WTC11 (cell line): ENCODE measurements at regions of chr12 and their contacts with region 1.

Region 1: GRCh38 chr12:53200458-53201176 is 6.4 kb downstream of the ITGB7 start:
- DNase-seq: no peak
- ATAC-seq: no peak
- H3K4me3 Mint-ChIP-seq: no peak overlapping the region
- H3K27ac Mint-ChIP-seq: no peak overlapping the region
- H3K4me1 Mint-ChIP-seq: no peaks in the 10 kb centered on the region
- H3K27me3 Mint-ChIP-seq: peaks cover 54% of the 10 kb centered on the region
- CTCF ChIP-seq: no peak

Region 2: GRCh38 chr12:53054112-53054833 is 146.3 kb before region 1 on chr12:
- CTCF ChIA-PET with region 1: interaction called, 22 read pairs
- POLR2A ChIA-PET with region 1: no interaction called
- DNase-seq: peak; percentile 97
- ATAC-seq: peak; percentile 75
- H3K4me3 Mint-ChIP-seq: peak overlapping the region; percentile 94
- H3K27ac Mint-ChIP-seq: peak overlapping the region; percentile 98
- H3K4me1 Mint-ChIP-seq: peaks cover 31% of the 10 kb centered on the region
- H3K27me3 Mint-ChIP-seq: peaks cover 40% of the 10 kb centered on the region
- CTCF ChIP-seq: no peak

Region 3: DNA sequence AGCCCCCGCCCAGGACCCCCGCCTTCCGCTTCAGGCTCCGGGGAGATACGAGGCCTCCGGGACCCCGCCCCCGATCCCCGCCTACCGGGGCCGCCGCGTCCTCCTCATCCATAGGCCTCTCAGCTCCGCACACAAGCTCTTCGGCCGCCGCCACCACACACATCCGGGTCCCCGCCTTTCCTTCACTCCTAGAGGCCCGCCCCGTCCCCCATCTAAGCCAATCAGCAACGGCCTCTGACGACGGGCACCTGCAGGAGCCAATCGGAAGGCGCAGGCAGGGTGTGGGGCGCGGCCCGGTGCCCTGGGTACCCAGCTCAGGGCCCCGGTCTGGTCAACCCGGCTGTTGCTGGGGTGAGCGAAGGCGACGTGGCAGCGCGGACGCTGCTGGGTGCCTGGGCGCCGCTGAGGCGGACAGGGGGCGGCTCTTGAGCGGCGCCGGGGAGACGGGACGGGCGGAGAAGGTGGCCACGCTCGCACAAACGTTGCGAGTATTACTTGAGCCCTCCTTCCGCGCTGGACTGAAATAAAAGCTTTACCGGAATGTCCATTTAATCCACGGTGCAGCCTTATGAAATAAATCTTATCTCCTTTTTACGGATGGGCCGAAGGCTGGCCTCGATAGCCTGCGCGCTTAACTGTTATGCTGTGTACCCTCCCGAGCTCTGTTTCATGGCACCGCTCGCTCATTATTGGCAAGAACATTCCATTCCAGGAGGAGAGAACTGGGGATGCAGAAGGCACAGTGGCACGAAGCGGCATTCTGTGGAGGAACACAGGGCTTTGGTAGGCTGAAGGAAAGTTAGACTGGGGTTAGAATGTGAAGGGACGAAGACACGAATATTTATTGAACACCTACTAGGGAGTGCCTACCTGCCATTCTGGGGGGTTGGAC is 121.1 kb before region 1 on chr12 and contains the start of gene SPRYD3:
- CTCF ChIA-PET with region 1: interaction called, 18 read pairs
- POLR2A ChIA-PET with region 1: interaction called, 3 read pairs
- DNase-seq: peak; percentile 98
- ATAC-seq: peak; percentile 95
- H3K4me3 Mint-ChIP-seq: peak within 1 kb of the TSS; percentile 85
- H3K27ac Mint-ChIP-seq: peak within 1 kb of the TSS; percentile 95
- H3K4me1 Mint-ChIP-seq: peaks cover 13% of the 10 kb centered on the region
- H3K27me3 Mint-ChIP-seq: peaks cover 43% of the 10 kb centered on the region
- CTCF ChIP-seq: no peak
- total RNA-seq, gene SPRYD3: 6.5 to 11.9 TPM (median 6.8 TPM) in 3 replicates

Region 4: GRCh38 chr12:53143355-53143754 is 57.3 kb before region 1 on chr12:
- CTCF ChIA-PET with region 1: no interaction called
- POLR2A ChIA-PET with region 1: no interaction called
- DNase-seq: no peak
- ATAC-seq: no peak
- H3K4me3 Mint-ChIP-seq: no peak overlapping the region
- H3K27ac Mint-ChIP-seq: no peak overlapping the region
- H3K4me1 Mint-ChIP-seq: no peaks in the 10 kb centered on the region
- H3K27me3 Mint-ChIP-seq: peaks cover 28% of the 10 kb centered on the region
- CTCF ChIP-seq: no peak

Region 5: DNA sequence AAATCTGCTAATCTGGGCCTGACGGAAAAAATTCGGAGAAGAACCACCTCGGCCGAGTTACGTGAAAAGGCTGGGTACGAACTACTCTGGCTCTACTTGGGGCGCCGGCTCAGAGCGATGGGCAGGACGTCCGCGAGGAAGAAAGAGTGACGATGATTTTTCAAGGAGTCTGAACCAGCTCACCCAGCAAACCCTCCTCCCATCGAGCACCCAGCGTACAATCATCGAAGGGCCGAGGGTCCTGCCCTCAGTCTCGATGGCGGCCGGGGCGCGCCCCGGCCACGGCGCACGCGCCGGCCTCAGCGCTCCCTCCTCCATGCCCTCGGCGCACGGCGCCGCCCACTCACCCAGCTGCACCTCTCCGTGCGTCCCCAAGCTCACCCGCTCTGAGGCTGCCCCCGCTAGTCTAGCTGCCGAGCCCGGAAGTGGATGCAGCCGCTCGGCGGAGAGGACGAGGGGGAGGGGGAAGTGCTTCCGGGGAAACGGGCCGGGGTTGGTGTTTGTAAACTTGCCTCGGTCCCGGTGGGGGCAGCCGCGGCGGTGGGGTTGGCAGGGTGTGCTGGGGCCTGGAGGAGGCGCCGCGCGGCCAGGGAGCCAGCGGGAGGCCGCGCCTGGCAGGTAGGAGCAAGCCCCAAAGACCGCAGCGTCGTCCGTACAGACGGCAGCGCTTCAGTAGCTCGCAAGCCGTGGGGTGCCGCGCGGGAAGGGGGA is 20.2 kb before region 1 on chr12 and contains the starts of genes CSAD and ZNF740:
- CTCF ChIA-PET with region 1: interaction called, 62 read pairs
- POLR2A ChIA-PET with region 1: no interaction called
- DNase-seq: peak; percentile 96
- ATAC-seq: peak; percentile 97
- H3K4me3 Mint-ChIP-seq: peak within 1 kb of the TSS; percentile 91
- H3K27ac Mint-ChIP-seq: peak within 1 kb of the TSS; percentile 93
- H3K4me1 Mint-ChIP-seq: peaks cover 24% of the 10 kb centered on the region
- H3K27me3 Mint-ChIP-seq: peaks cover 48% of the 10 kb centered on the region
- CTCF ChIP-seq: no peak
- total RNA-seq, gene CSAD: 11.5 to 12.6 TPM (median 12.3 TPM) in 3 replicates
- total RNA-seq, gene ZNF740: 26.6 to 36.6 TPM (median 36.1 TPM) in 3 replicates

Region 6: GRCh38 chr12:53231826-53232645 is 31.4 kb after region 1 on chr12 and contains the start of gene RARG:
- CTCF ChIA-PET with region 1: interaction called, 10 read pairs
- POLR2A ChIA-PET with region 1: no interaction called
- DNase-seq: peak; percentile 57
- ATAC-seq: peak; percentile 43
- H3K4me3 Mint-ChIP-seq: peak within 1 kb of the TSS; percentile 82
- H3K27ac Mint-ChIP-seq: peak within 1 kb of the TSS; percentile 88
- H3K4me1 Mint-ChIP-seq: peaks cover 77% of the 10 kb centered on the region
- H3K27me3 Mint-ChIP-seq: peaks cover 5% of the 10 kb centered on the region; the same call in 1 of the 2 replicates
- CTCF ChIP-seq: no peak
- total RNA-seq, gene RARG: 68.1 to 77.2 TPM (median 69.7 TPM) in 3 replicates

Region 7: GRCh38 chr12:53295070-53295890 is 94.7 kb after region 1 on chr12 and contains the start of gene PFDN5:
- CTCF ChIA-PET with region 1: interaction called, 13 read pairs
- POLR2A ChIA-PET with region 1: interaction called, 4 read pairs
- DNase-seq: peak; percentile 85
- ATAC-seq: peak; percentile 85
- H3K4me3 Mint-ChIP-seq: peak within 1 kb of the TSS; percentile 99
- H3K27ac Mint-ChIP-seq: peak within 1 kb of the TSS; percentile 96
- H3K4me1 Mint-ChIP-seq: peaks cover 18% of the 10 kb centered on the region
- H3K27me3 Mint-ChIP-seq: no peaks in the 10 kb centered on the region
- CTCF ChIP-seq: no peak
- total RNA-seq, gene PFDN5: 263 to 286 TPM (median 270 TPM) in 3 replicates

Region 8: GRCh38 chr12:53675651-53676453 is 475.2 kb after region 1 on chr12 and contains the start of gene ATP5MC2:
- CTCF ChIA-PET with region 1: no interaction called
- POLR2A ChIA-PET with region 1: no interaction called
- DNase-seq: peak; percentile 97
- ATAC-seq: peak; percentile 88
- H3K4me3 Mint-ChIP-seq: peak within 1 kb of the TSS; percentile 95
- H3K27ac Mint-ChIP-seq: peak within 1 kb of the TSS; percentile 98
- H3K4me1 Mint-ChIP-seq: peaks cover 42% of the 10 kb centered on the region
- H3K27me3 Mint-ChIP-seq: no peaks in the 10 kb centered on the region; the same call in 1 of the 2 replicates
- CTCF ChIP-seq: peak; percentile 83
- total RNA-seq, gene ATP5MC2: 411 to 527 TPM (median 517 TPM) in 3 replicates